Panc1 (cell line): ENCODE measurements at regions of chr7 and their contacts with region 1.

Region 1: DNA sequence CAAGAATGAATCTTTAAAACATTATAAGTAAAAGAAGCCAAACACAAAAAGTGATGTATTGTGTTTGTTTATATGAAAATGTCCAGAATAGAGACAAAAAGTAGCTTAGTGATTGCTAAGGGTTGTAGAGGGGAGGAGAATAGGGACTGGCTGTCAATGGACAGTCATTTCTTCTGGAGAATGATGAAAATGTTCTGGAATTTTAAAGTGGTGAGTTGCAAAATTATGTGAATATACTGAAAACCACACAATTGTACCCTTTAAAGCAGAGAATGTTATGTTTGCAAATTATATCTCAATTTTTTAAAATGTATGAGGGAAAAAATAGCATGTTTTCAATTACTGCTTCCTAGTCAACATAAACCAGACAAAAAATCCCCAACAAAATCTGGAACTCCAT is 174.2 kb downstream of the KMT2E start:
- DNase-seq: no peak
- ATAC-seq: no peak
- H3K4me3 ChIP-seq: no peak overlapping the region
- H3K27ac ChIP-seq: no peak overlapping the region
- H3K4me1 ChIP-seq: no peaks in the 10 kb centered on the region
- H3K27me3 ChIP-seq: no peaks in the 10 kb centered on the region
- CTCF ChIP-seq: no peak

Region 2: GRCh38 chr7:105101864-105102263 is 86.3 kb before region 1 on chr7:
- CTCF ChIA-PET with region 1: interaction called, 11 read pairs
- POLR2A ChIA-PET with region 1: interaction called, 4 read pairs
- in situ Hi-C with region 1: no loop called
- intact Hi-C with region 1: no loop called
- DNase-seq: no peak
- ATAC-seq: no peak
- H3K4me3 ChIP-seq: no peak overlapping the region
- H3K27ac ChIP-seq: no peak overlapping the region
- H3K4me1 ChIP-seq: no peaks in the 10 kb centered on the region
- H3K27me3 ChIP-seq: no peaks in the 10 kb centered on the region
- CTCF ChIP-seq: no peak

Region 3: GRCh38 chr7:105199386-105199785 is 11.2 kb after region 1 on chr7:
- CTCF ChIA-PET with region 1: interaction called, 10 read pairs
- POLR2A ChIA-PET with region 1: no interaction called
- in situ Hi-C with region 1: no loop called
- intact Hi-C with region 1: no loop called
- DNase-seq: no peak
- ATAC-seq: no peak
- H3K4me3 ChIP-seq: no peak overlapping the region
- H3K27ac ChIP-seq: no peak overlapping the region
- H3K4me1 ChIP-seq: 0 out of 2 replicates have a peak, but pooled peaks cover 4% of the 10 kb centered on the region
- H3K27me3 ChIP-seq: no peaks in the 10 kb centered on the region
- CTCF ChIP-seq: no peak